ENCODE measurements at regions of chr22 and their contacts with region 1.

Region 1: GRCh38 chr22:41397143-41397811 is 15.5 kb downstream of the TEF start:
- DNase-seq: no peak
- H3K4me3 ChIP-seq: no peak overlapping the region
- H3K27ac ChIP-seq: peak overlapping the region in 55 of 59 donors; percentile 26 to 100 (median 96)
- H3K27me3 ChIP-seq: no peaks in the 10 kb centered on the region
- CTCF ChIP-seq: no peak

Region 2: GRCh38 chr22:41596776-41597634 is 199.7 kb after region 1 on chr22:
- intact Hi-C with region 1: loop called in 1 of 2 experiments (anchors 5 kb)
- DNase-seq: peak in 9 of 10 donors; percentile 47 to 76 (median 64)
- H3K4me3 ChIP-seq: no peak overlapping the region
- H3K27ac ChIP-seq: peak overlapping the region in 52 of 59 donors; percentile 1 to 74 (median 50)
- H3K27me3 ChIP-seq: no peaks in the 10 kb centered on the region
- CTCF ChIP-seq: peak; percentile 8 to 79 (median 66)